ENCODE measurements at regions of chr11 and their contacts with region 1.

Region 1: DNA sequence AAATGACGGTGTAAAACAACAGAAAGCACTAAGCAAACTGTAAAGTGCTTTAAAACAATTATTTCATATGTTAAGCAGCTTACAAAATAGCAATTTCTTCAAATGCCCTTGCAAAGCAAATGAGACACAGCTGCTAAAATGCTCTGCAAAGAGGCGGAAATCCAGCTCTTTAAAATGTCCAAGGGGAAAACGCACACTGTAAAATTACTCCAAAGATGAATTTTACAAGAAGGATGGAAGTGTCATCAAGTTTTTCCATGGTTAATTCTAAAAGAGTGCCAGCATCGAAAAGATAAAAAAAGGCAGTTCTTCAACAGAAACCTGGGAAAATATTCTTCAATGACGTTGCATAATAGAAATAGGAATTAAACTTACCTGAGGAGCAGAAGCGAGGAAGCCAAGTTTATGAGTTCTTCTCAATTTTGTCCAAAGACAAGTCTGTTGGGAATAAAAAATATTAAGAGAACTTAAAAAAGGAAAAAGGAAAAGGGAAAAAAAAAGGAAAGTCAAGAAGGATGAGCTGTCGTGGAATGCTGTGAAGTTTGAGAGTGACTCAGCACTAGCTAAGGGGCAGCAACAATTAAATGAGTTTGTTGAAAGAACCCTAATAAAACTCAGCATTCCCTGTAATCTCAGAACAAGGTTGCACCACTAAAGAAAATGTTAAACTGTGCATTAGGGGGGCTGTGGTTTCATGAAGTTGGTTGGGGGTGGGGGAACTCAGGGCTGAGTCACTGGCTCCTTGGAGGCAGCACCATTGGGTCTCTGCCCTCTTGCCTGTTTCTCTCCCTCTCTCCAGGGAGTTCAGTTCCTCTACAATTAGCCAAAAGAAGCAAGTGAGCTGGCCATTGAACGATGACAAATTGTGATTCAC is 64.2 kb upstream of the BLID start:
- DNase-seq: peak; percentile 95
- H3K4me3 ChIP-seq: peak overlapping the region; percentile 59
- CTCF ChIP-seq: no peak

Region 2: DNA sequence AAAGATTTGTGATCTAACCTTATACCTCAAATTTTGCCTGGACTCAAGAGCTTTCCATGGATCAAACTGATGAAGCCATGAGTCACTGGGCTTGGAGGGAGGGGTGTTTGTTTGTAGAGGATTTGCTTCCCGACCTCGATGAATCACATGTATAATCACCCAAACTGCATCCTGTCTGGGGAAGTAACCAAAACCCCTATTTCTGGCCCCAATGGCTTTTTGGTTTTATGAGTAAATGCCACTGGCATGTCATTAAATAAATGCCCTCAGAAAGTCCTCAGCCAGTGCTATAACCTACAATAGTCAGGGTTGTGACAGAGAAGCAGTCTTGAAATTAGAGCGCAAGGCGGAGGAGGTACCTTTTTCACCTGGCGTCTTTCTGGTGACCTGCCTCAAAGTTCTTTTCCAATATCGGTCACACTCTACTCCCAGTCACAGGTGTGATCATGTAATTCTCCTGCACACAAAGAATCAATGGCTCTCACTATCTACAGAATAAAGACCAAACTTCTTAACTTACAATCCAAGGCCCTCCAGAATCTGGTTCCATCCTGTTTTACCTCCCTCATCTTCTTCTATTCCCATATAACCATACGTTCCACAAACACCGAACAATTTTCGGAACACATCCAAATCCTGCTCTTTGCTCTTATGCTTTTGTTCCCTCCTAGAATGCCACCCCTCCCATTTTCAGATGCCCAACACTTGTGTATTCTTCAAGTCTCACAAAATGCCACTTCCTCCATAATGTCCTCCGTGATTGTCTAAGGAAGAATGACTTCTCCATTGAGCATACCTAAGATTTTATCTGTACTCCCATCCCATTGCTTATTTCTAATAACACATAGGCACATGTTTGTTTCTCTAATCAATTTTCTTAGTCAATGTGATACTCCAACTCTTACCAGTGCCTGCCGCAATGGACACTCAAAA is 17.1 kb after region 1 on chr11:
- CTCF ChIA-PET with region 1: interaction called, 30 read pairs
- POLR2A ChIA-PET with region 1: interaction called, 24 read pairs
- DNase-seq: peak; percentile 95
- H3K4me3 ChIP-seq: no peak overlapping the region
- CTCF ChIP-seq: no peak

Region 3: GRCh38 chr11:122209619-122210366 is 29.6 kb after region 1 on chr11:
- CTCF ChIA-PET with region 1: interaction called, 30 read pairs
- POLR2A ChIA-PET with region 1: interaction called, 10 read pairs
- DNase-seq: no peak
- H3K4me3 ChIP-seq: no peak overlapping the region
- CTCF ChIP-seq: no peak

Region 4: GRCh38 chr11:122478986-122479385 is 298.8 kb after region 1 on chr11:
- CTCF ChIA-PET with region 1: no interaction called
- POLR2A ChIA-PET with region 1: no interaction called
- DNase-seq: no peak
- H3K4me3 ChIP-seq: no peak overlapping the region
- CTCF ChIP-seq: no peak

Measured in AG04449 (cell line).